GM12878 (cell line): ENCODE measurements at regions of chr6 and their contacts with region 1.

Region 1: DNA sequence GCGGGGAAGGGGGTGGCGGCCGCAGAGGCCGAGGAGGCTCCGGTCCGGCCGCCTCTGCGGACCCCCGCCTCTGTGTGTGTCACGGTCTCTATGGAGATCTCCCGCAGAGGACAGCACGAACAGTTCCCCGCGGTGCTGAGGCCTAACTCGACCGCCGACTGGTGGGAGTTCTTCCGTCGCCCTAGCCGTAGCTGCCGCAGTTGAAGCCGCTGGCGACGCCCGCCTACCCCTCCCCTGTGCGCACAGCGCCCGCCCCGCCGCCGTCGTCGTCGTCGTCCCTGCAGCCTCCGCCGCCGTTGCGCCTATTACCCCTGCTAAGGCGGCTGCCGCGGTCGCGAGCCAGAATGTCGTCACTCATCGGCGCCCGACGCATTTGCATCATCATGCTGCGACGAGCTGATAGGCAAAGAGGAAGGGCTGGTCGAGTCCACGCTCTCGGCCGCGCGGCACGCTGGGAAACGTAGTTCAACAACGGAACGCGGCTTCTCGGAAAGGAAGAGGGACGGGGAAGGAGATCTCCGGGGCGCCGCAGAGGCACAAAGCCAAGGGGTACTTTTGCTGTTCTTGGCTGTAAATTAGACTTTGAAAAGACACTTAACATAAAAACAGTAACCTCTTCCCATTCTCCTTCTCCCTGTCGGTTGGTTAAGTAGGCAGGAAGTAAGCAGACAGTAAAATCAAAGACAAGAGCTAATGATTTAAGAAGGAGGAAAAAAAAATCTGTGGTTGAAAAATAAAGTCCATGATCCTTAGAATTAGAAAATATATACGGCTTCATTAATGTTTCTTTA is at the start of gene NUP153:
- DNase-seq: peak; percentile 96
- ATAC-seq: peak; percentile 71
- H3K4me3 ChIP-seq: peak within 1 kb of the TSS; percentile 95
- H3K27ac ChIP-seq: peak within 1 kb of the TSS; percentile 96
- H3K4me1 ChIP-seq: no peaks in the 10 kb centered on the region
- H3K27me3 ChIP-seq: no peaks in the 10 kb centered on the region
- CTCF ChIP-seq: no peak
- EP300 ChIP-seq: 0 out of 4 replicates have a peak, but pooled peaks have one; percentile 3 to 36
- POLR2A ChIP-seq: peak; percentile 88
- RAD21 ChIP-seq: no peak
- polyA plus RNA-seq, gene NUP153: 13.9 to 19.9 TPM

Region 2: GRCh38 chr6:17599885-17600526 is 106.8 kb before region 1 on chr6 and contains the start of gene FAM8A1:
- CTCF ChIA-PET with region 1: interaction called, 24 read pairs
- POLR2A ChIA-PET with region 1: interaction called, 12 read pairs
- RAD21 ChIA-PET with region 1: interaction called, 13 read pairs
- SMC1A ChIA-PET with region 1: interaction called, 4 read pairs
- in situ Hi-C with region 1: no loop called
- intact Hi-C with region 1: loop called (anchors 2 kb)
- DNase-seq: peak; percentile 66
- ATAC-seq: peak; percentile 90
- H3K4me3 ChIP-seq: peak within 1 kb of the TSS; percentile 95
- H3K27ac ChIP-seq: peak within 1 kb of the TSS; percentile 72
- H3K4me1 ChIP-seq: no peaks in the 10 kb centered on the region; the same call in 1 of the 2 replicates
- H3K27me3 ChIP-seq: no peaks in the 10 kb centered on the region
- CTCF ChIP-seq: peak in 2 of 3 experiments; percentile 23 to 51; a peak in 2 of 6 replicates
- EP300 ChIP-seq: peak in 1 of 2 experiments; percentile 35; a peak in 1 of 4 replicates
- POLR2A ChIP-seq: peak; percentile 76
- RAD21 ChIP-seq: no peak
- polyA plus RNA-seq, gene FAM8A1: 1.4 to 1.5 TPM

Region 3: GRCh38 chr6:17803409-17803808 is 96.6 kb after region 1 on chr6:
- CTCF ChIA-PET with region 1: interaction called, 37 read pairs
- POLR2A ChIA-PET with region 1: no interaction called
- RAD21 ChIA-PET with region 1: interaction called, 9 read pairs
- SMC1A ChIA-PET with region 1: interaction called, 16 read pairs
- in situ Hi-C with region 1: no loop called
- intact Hi-C with region 1: loop called (anchors 2 kb)
- DNase-seq: no peak
- ATAC-seq: no peak
- H3K4me3 ChIP-seq: no peak overlapping the region
- H3K27ac ChIP-seq: no peak overlapping the region
- H3K4me1 ChIP-seq: no peaks in the 10 kb centered on the region
- H3K27me3 ChIP-seq: no peaks in the 10 kb centered on the region
- CTCF ChIP-seq: no peak
- EP300 ChIP-seq: no peak
- POLR2A ChIP-seq: no peak
- RAD21 ChIP-seq: no peak

Region 4: DNA sequence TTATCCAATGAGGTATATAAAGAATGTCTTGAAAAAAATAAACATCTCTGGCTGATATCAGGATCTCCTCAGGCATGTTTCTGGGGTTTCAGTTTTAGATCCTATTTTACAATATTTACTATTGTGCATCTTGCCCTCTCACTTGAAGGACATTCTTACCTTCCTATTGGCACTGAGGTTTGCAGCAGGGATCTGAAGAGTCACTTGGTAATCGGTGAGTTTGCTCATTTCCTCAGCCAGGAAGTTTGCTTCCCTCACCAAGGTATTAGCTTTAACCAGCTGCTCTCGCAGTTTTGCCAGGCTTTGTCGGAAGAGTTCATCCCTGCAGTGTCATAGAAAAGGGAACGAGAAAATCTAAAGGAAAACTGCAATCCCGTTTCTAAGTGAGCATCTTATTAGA is 101.8 kb after region 1 on chr6:
- CTCF ChIA-PET with region 1: interaction called, 37 read pairs
- POLR2A ChIA-PET with region 1: no interaction called
- RAD21 ChIA-PET with region 1: interaction called, 9 read pairs
- SMC1A ChIA-PET with region 1: interaction called, 16 read pairs
- in situ Hi-C with region 1: no loop called
- intact Hi-C with region 1: loop called (anchors 2 kb)
- DNase-seq: no peak
- ATAC-seq: no peak
- H3K4me3 ChIP-seq: no peak overlapping the region
- H3K27ac ChIP-seq: no peak overlapping the region
- H3K4me1 ChIP-seq: no peaks in the 10 kb centered on the region
- H3K27me3 ChIP-seq: no peaks in the 10 kb centered on the region
- CTCF ChIP-seq: no peak
- EP300 ChIP-seq: no peak
- POLR2A ChIP-seq: no peak
- RAD21 ChIP-seq: no peak

Region 5: DNA sequence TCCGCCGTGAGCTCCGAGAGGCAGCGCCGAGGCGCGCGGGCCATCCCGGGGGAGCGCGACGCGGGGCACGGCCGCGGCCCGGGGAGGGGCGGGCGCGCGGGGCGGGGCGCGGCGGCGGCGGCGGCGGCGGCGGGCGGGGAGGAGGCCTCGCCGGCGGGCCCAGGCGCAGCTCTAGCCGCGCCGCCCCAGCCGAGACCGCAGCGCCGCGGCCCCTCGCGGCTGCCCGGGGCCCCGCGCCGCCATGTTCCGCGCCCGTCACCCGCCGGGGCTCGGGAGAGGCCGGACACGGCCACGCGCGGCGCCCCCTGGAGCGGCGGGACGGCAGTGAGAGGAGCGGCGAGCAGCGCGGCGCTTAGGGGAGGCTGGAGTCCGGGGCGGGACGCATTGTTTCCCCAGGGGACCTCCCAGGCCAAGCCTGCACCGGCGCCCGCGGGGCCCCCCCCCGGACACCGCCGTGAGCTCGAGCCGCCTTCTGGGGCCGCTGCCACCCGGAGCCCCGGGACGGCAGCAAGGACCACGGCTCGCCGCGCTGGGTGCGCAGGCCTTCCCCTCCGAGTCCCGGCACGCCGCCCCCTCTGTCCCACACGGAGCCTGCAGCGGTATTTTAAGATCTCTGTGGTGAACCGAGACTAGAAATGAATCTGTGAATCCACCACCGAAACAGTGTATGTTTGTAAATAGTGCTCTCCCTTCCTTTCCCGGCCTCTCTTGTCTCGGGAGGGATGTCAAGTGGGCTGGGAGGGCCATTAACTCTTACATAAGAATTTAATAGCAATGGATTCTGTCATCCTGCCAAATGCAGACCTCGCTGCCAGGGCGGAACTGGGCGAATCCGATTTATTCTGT is 281.0 kb after region 1 on chr6 and contains the start of gene KIF13A:
- CTCF ChIA-PET with region 1: no interaction called
- POLR2A ChIA-PET with region 1: no interaction called
- RAD21 ChIA-PET with region 1: no interaction called
- SMC1A ChIA-PET with region 1: no interaction called
- in situ Hi-C with region 1: no loop called
- intact Hi-C with region 1: loop called (anchors 5 kb)
- DNase-seq: no peak
- ATAC-seq: peak; percentile 88
- H3K4me3 ChIP-seq: peak within 1 kb of the TSS; percentile 68; the same call in 1 of the 2 replicates
- H3K27ac ChIP-seq: no peak within 1 kb of the TSS
- H3K4me1 ChIP-seq: peaks cover 6% of the 10 kb centered on the region
- H3K27me3 ChIP-seq: peaks cover 6 to 21% of the 10 kb centered on the region in 2 experiments
- CTCF ChIP-seq: peak in 2 of 3 experiments; percentile 10 to 14; a peak in 2 of 6 replicates
- EP300 ChIP-seq: no peak
- POLR2A ChIP-seq: 0 out of 2 replicates have a peak, but pooled peaks have one; percentile 22
- RAD21 ChIP-seq: no peak
- polyA plus RNA-seq, gene KIF13A: 0.02 to 0.07 TPM

Region 6: DNA sequence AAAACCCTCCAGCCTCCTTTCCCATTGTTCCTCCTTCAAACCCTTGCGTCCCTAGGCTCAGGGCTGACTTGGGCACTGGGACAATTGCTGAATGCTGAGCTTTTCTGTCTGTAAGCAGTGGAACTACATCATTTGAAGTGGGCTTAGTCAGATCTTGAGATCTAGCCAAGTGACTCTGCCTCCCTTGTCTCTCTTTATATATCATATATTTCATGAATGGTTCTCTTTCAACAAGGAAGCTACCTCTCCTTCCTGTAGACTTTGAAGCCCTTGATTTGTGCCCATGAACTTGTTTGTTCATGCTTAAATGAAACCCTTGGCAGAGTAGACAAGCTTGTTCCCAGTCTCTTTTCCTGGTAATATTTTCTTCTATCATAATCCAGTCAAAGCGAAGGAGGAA is 340.6 kb after region 1 on chr6:
- CTCF ChIA-PET with region 1: no interaction called
- POLR2A ChIA-PET with region 1: no interaction called
- RAD21 ChIA-PET with region 1: no interaction called
- SMC1A ChIA-PET with region 1: no interaction called
- in situ Hi-C with region 1: no loop called
- intact Hi-C with region 1: no loop called
- DNase-seq: no peak
- ATAC-seq: no peak
- H3K4me3 ChIP-seq: no peak overlapping the region
- H3K27ac ChIP-seq: no peak overlapping the region
- H3K4me1 ChIP-seq: no peaks in the 10 kb centered on the region
- H3K27me3 ChIP-seq: no peaks in the 10 kb centered on the region
- CTCF ChIP-seq: no peak
- EP300 ChIP-seq: no peak
- POLR2A ChIP-seq: no peak
- RAD21 ChIP-seq: no peak

Region 7: GRCh38 chr6:18155150-18155863 is 448.5 kb after region 1 on chr6 and contains the start of gene KDM1B:
- CTCF ChIA-PET with region 1: interaction called, 3 read pairs
- POLR2A ChIA-PET with region 1: no interaction called
- RAD21 ChIA-PET with region 1: interaction called, 3 read pairs
- SMC1A ChIA-PET with region 1: no interaction called
- in situ Hi-C with region 1: loop called (anchors 5 kb)
- intact Hi-C with region 1: loop called (anchors 10 kb)
- DNase-seq: peak; percentile 86
- ATAC-seq: peak; percentile 90
- H3K4me3 ChIP-seq: peak within 1 kb of the TSS; percentile 85
- H3K27ac ChIP-seq: peak within 1 kb of the TSS; percentile 81
- H3K4me1 ChIP-seq: peaks cover 9% of the 10 kb centered on the region
- H3K27me3 ChIP-seq: no peaks in the 10 kb centered on the region
- CTCF ChIP-seq: no peak
- EP300 ChIP-seq: no peak
- POLR2A ChIP-seq: peak; percentile 79
- RAD21 ChIP-seq: no peak
- polyA plus RNA-seq, gene KDM1B: 1.7 to 2.9 TPM

Region 8: DNA sequence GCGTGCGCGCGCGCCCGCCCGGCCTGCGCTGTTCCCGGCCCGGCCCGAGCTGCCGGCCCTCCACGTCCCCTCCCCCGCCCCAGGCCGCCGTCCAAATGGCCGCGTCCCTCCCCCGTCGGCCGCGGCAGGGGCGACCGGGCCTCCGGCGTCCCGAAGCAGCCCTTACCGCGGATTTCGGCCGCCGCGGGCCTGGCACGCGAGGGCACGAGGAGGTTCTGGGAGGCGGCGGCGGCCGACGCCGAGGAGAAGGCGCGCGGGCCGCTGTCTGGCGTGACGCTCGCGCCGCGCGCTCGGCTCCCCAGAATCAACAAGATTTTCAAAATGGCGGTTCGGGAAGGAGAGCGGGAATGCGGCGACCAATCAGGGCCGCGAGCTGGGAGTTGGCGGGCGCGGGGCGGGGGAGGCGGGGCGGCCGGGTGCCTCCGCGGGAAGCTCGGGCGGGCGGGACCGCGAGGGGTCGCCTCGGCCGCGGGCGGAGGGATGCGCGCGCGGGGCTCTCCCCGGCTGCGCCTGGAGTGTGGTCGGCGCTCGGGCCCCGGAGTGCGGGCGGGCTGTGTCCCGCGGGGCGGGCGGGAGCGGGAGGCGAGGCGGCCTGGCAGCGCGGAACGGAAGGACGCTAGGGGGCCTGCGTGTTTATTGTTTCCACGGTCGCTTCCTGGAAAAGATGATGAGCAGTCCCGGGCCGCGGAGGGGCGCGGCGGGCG is 557.6 kb after region 1 on chr6 and contains the start of gene DEK:
- CTCF ChIA-PET with region 1: interaction called, 4 read pairs
- POLR2A ChIA-PET with region 1: no interaction called
- RAD21 ChIA-PET with region 1: no interaction called
- SMC1A ChIA-PET with region 1: no interaction called
- in situ Hi-C with region 1: no loop called
- intact Hi-C with region 1: loop called (anchors 5 kb)
- DNase-seq: no peak
- ATAC-seq: peak; percentile 44
- H3K4me3 ChIP-seq: peak within 1 kb of the TSS; percentile 70
- H3K27ac ChIP-seq: peak within 1 kb of the TSS; percentile 96
- H3K4me1 ChIP-seq: peaks cover 28% of the 10 kb centered on the region
- H3K27me3 ChIP-seq: no peaks in the 10 kb centered on the region
- CTCF ChIP-seq: peak; percentile 42 to 50 (median 46); a peak in 5 of 6 replicates
- EP300 ChIP-seq: no peak
- POLR2A ChIP-seq: peak; percentile 79
- RAD21 ChIP-seq: peak; percentile 28; the same call in 1 of the 2 replicates
- polyA plus RNA-seq, gene DEK: 111 to 117 TPM